Heart left ventricle (tissue), 16 donors: ENCODE measurements at regions of chr16 and their contacts with region 1.

Region 1: DNA sequence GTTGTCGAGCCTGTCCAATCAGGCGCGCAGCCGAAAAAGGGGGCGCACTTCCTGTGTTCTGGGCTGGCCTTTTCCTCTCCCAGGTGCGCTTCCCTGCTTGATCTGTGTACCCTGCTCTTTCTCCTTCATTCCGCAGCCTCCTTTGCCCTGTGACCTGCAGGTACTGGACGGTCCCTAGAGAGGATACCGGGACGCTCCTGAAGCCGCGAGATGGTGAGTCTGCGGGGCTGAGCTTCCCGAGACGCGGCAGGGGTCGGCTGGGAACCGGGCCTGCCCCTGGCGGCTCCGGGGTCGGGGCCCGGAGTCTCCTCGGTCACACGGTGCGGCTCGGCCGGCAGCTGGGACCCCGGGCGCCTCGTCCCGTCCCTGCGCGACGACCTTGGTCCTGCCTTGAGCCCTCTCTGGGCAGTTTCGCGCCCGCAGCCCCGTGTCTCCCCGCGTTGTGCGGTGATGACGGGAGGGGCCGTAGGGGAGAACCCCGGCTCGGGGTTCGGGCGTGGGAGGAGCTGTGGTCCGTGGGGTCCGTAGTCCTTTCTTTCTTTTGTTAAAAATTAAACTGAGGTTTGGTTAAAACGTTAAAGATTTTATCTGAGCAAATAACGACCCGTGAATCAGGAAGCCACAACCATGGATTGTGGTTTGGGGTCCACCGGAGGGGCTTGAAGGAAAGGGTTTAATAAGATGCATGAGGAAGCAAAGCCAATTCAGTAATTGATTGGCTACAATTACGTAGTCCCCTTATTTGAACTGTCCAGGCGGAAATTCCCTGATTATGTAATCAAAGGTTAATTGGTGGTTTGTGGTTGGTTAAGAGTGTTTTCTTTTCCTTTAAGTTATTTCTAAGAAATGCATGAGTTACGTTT is 172.8 kb upstream of the ZNF267 start:
- DNase-seq: peak; percentile 78 to 90 (median 84)
- ATAC-seq: peak; percentile 94 to 99 (median 95)
- H3K4me3 ChIP-seq: peak overlapping the region; percentile 54 to 93 (median 75)
- H3K27ac ChIP-seq: peak overlapping the region in 7 of 12 donors; percentile 1 to 72 (median 57)
- H3K4me1 ChIP-seq: peaks cover 0 to 21% (median 8%) of the 10 kb centered on the region in 12 donors
- H3K27me3 ChIP-seq: peaks cover 0 to 5% (median 0%) of the 10 kb centered on the region in 9 donors
- CTCF ChIP-seq: peak in 6 of 12 donors; percentile 7 to 40 (median 20)
- POLR2A ChIP-seq: peak in 1 of 2 donors; percentile 12

Region 2: DNA sequence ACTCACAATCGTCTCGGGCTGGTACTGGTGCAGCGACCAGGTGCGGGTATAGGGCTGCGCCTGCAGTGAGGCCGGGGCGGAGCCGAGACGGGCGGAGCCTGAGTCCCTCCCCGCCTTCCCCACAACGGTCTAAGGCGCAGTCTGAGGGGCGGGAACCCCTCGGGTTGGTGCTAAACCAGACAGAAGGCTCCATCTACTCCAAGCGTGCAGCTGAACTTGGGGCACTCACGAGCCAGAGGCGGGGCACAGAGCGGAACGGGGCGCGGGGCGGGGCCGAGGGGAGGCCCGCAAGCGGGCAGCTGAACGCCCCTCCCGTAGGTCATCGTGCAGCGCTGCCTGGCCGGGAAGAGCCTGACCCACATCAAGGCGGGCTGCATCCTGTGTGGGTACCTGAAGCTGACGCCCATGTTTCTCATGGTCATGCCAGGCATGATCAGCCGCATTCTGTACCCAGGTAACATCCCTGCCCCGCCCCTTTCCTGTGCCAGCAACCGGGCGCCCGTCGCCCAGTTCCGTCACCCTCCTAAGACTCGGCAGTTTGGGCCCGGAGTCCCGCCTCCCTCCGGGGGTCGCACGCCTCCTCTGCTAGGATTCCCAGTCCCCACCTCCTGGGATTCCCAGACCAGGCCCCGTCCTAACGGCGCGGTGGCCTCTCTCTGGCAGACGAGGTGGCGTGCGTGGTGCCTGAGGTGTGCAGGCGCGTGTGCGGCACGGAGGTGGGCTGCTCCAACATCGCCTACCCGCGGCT is 212.9 kb before region 1 on chr16:
- intact Hi-C with region 1: loop called in 1 of 10 experiments (anchors 10 kb)
- DNase-seq: peak in 1 of 5 donors; percentile 72
- ATAC-seq: peak; percentile 42 to 65 (median 63)
- H3K4me3 ChIP-seq: peak overlapping the region; percentile 27 to 68 (median 58)
- H3K27ac ChIP-seq: no peak overlapping the region
- H3K4me1 ChIP-seq: peaks cover 8 to 22% (median 17%) of the 10 kb centered on the region in 12 donors
- H3K27me3 ChIP-seq: peaks cover 0 to 23% (median 7%) of the 10 kb centered on the region in 9 donors
- CTCF ChIP-seq: no peak
- POLR2A ChIP-seq: no peak